Panc1 (cell line): ENCODE measurements at regions of chr20 and their contacts with region 1.

Region 1: GRCh38 chr20:9889270-9889981 is 50.5 kb upstream of the PAK5 start:
- DNase-seq: no peak
- ATAC-seq: no peak
- H3K4me3 ChIP-seq: peak overlapping the region in 1 of 2 experiments; percentile 11; a peak in 1 of 4 replicates
- H3K27ac ChIP-seq: no peak overlapping the region
- H3K4me1 ChIP-seq: no peaks in the 10 kb centered on the region
- H3K27me3 ChIP-seq: no peaks in the 10 kb centered on the region
- CTCF ChIP-seq: no peak

Region 2: DNA sequence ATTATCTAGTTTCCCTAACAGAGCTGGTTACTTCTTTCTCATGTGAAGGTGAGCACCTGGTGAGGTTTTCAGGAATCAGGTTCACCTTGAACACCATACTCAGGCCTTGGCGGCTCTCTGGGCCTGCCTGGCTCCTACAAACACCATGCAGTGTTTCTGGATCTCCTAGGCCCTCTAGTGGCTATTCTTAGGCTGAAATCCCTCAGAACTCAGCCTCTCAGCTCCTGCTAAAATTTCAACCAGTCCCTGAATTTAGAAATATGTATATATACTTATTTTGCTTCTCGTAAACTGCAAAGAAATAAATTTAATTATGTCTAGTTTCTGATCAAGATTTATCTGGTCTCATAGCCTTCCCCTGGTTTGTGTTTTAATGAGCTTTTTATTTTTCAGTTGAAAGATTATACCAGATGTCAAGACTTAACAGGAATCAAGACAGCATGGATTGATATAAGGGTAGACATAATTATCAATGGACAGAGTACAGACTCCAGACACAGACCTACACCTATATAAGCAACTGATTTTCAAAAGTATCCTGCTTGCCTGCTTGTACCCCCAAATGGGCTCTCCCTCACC is 201.3 kb after region 1 on chr20:
- CTCF ChIA-PET with region 1: interaction called, 10 read pairs
- POLR2A ChIA-PET with region 1: no interaction called
- in situ Hi-C with region 1: no loop called
- intact Hi-C with region 1: no loop called
- DNase-seq: peak; percentile 48
- ATAC-seq: peak; percentile 85
- H3K4me3 ChIP-seq: no peak overlapping the region
- H3K27ac ChIP-seq: no peak overlapping the region
- H3K4me1 ChIP-seq: peaks cover 4% of the 10 kb centered on the region; the same call in 1 of the 2 replicates
- H3K27me3 ChIP-seq: no peaks in the 10 kb centered on the region
- CTCF ChIP-seq: peak; percentile 86